Calu3 (cell line): ENCODE measurements at regions of chr5 and their contacts with region 1.

Region 1: DNA sequence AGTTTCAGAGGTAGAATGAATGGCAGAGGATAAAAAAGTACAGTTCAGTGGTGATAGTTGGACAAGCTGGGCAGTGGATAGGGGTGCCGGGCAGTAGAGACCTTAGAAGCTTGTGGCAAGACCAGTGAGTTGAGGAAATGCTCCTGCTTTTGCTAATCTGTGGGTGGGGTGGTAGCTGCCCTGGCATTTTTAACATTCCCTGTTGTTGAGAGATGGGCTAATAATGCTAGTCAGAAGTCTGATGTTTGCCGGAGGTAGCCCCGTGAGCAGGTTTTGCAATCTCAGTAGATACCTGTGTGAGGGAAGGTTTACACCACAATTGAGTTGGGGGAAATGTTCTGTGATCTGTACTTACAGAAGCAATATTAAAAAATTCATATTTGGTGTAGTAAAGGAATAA is 91.1 kb downstream of the TRIO start:
- DNase-seq: peak; percentile 52
- H3K4me3 Mint-ChIP-seq: peak overlapping the region; percentile 13
- H3K27ac Mint-ChIP-seq: peak overlapping the region; percentile 78
- H3K4me1 Mint-ChIP-seq: peaks cover 64% of the 10 kb centered on the region
- H3K27me3 Mint-ChIP-seq: no peaks in the 10 kb centered on the region
- CTCF ChIP-seq: no peak

Region 2: GRCh38 chr5:14322437-14323187 is 88.4 kb after region 1 on chr5:
- CTCF ChIA-PET with region 1: interaction called, 10 read pairs
- intact Hi-C with region 1: no loop called
- DNase-seq: no peak
- H3K4me3 Mint-ChIP-seq: no peak overlapping the region
- H3K27ac Mint-ChIP-seq: no peak overlapping the region
- H3K4me1 Mint-ChIP-seq: no peaks in the 10 kb centered on the region
- H3K27me3 Mint-ChIP-seq: no peaks in the 10 kb centered on the region
- CTCF ChIP-seq: no peak

Region 3: GRCh38 chr5:14452685-14453454 is 218.7 kb after region 1 on chr5:
- CTCF ChIA-PET with region 1: no interaction called
- intact Hi-C with region 1: no loop called
- DNase-seq: no peak
- H3K4me3 Mint-ChIP-seq: no peak overlapping the region
- H3K27ac Mint-ChIP-seq: no peak overlapping the region
- H3K4me1 Mint-ChIP-seq: no peaks in the 10 kb centered on the region
- H3K27me3 Mint-ChIP-seq: no peaks in the 10 kb centered on the region
- CTCF ChIP-seq: no peak